Esophagus muscularis mucosa (tissue), 4 donors: ENCODE measurements at regions of chrX and their contacts with region 1.

Region 1: GRCh38 chrX:40663880-40664633 is 16.7 kb upstream of the CXorf38 start:
- DNase-seq: no peak
- H3K4me3 ChIP-seq: no peak overlapping the region
- H3K27ac ChIP-seq: peak overlapping the region in 1 of 4 donors; percentile 7
- H3K4me1 ChIP-seq: peaks cover 0 to 10% (median 7%) of the 10 kb centered on the region in 4 donors
- H3K27me3 ChIP-seq: no peaks in the 10 kb centered on the region
- CTCF ChIP-seq: peak; percentile 26 to 49 (median 40)
- EP300 ChIP-seq: no peak
- POLR2A ChIP-seq: no peak

Region 2: GRCh38 chrX:40792433-40792832 is 128.4 kb after region 1 on chrX:
- intact Hi-C with region 1: loop called (anchors 5 kb)
- DNase-seq: no peak
- H3K4me3 ChIP-seq: no peak overlapping the region
- H3K27ac ChIP-seq: no peak overlapping the region
- H3K4me1 ChIP-seq: peaks cover 4 to 14% (median 11%) of the 10 kb centered on the region in 4 donors
- H3K27me3 ChIP-seq: no peaks in the 10 kb centered on the region
- CTCF ChIP-seq: no peak
- EP300 ChIP-seq: no peak
- POLR2A ChIP-seq: no peak